ENCODE measurements at regions of chr1 and their contacts with region 1.

Region 1: GRCh38 chr1:31789259-31790065 is 25.3 kb upstream of the ADGRB2 start:
- DNase-seq: peak; percentile 98

Region 2: GRCh38 chr1:31531177-31531999 is 258.1 kb before region 1 on chr1:
- intact Hi-C with region 1: no loop called
- DNase-seq: no peak

Region 3: DNA sequence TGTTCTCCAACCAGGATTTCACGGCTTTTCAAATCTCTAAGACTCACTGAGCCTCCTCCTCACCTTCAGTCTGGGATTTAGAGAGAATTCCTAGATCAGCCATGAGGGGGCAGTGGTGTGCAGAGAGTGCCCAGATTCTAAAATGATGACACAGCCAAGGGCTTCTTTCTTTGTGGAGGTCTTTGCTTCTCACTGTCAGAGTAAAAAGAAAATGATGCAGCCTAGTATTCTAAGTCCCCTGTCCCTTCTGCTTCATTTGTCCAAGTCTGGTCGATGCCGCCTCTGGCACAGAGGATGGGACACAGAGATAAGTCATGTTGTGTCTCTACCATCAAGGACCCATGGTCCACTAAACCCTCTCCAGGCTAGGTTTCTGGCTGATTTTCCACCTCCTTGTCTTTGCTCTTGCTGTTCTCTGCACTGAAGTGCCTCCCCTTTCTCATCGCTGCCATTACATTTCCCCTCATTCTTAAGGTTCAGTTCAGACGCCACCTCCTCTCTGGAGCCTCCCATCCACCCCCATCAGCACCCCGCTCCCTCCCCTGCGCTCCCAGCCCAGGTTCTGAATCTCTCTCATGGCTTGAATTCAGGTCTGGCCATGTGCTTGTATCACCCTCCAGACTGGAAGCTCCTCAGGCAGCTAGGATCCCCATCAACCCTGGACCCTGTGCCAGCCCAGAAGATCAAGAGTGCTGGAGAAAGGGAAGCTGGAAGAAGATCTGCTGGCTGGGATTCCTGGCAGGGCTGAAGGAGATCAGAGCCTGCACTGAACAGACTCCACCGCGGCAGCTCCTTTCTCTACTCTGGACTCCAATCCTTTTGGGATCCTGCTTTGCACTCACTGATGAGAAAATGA is 225.1 kb before region 1 on chr1:
- intact Hi-C with region 1: loop called (anchors 5 kb)
- DNase-seq: peak; percentile 76

Region 4: DNA sequence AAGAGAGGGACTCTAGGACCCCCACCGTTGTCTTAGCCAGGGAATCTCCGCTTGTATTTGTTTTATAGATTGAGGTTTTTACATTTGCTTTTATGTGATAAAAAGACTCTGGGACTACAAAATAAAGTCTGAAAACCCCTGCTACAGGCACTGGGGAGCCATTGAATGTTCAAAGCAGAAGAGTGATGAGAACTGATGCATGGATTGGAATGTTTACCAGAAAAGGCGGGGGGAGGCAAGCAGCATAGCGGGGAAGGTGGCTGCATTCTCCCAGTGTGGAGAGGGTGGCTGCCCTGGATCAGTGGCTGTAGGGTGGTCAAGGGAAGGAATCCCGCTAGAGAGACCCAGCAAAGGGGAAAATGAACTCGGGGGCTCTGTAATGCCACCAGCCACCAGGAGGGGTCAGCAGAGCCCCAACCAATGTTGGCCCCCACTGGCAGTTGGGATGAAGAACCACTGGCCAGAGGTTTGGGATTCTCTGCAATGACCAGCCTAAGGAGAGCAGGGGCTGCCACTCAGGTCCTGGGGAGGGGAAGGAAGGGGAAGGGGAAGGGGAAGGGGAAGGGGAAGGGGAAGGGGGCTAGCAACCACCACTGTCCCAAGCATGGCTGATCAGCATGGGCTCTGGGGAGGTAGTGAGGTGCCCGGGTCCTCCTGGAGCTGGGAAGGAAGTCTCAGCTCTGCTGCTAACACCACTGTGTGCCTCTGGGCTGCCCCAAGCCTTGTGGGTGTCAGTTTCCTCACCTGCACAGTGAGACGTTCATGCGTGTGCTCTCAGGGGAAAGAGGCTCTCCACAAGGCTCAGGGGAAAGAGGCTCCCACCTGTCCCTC is 125.6 kb before region 1 on chr1:
- intact Hi-C with region 1: loop called (anchors 1 kb)
- DNase-seq: no peak

Region 5: DNA sequence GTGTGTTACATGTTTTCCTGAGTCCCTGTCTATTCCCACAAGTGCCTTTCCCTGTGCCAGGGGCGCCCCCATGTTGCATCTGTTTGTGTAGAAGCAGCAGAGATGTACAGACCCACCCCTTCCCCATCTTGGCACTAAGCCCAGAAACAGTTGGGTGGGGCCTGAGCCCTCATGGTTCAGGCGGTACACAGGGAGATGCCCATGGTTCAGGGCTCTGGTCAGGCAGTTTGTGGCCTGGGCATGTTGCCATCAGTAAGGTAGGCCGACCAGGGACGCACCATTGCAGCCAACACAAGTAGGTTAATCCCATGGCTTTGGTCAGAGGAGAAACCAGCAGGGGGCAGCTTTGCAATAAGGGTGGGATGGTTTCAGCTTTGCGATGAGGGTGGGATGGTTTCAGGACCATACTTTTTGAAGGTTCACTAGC is 24.4 kb before region 1 on chr1:
- intact Hi-C with region 1: loop called (anchors 2 kb)
- DNase-seq: no peak

Region 6: GRCh38 chr1:31977385-31978131 is 188.1 kb after region 1 on chr1:
- intact Hi-C with region 1: no loop called
- DNase-seq: no peak

Measured in cardiac septum (tissue), 1 donor.